GM12878 (cell line): ENCODE measurements at regions of chr2 and their contacts with region 1.

Region 1: DNA sequence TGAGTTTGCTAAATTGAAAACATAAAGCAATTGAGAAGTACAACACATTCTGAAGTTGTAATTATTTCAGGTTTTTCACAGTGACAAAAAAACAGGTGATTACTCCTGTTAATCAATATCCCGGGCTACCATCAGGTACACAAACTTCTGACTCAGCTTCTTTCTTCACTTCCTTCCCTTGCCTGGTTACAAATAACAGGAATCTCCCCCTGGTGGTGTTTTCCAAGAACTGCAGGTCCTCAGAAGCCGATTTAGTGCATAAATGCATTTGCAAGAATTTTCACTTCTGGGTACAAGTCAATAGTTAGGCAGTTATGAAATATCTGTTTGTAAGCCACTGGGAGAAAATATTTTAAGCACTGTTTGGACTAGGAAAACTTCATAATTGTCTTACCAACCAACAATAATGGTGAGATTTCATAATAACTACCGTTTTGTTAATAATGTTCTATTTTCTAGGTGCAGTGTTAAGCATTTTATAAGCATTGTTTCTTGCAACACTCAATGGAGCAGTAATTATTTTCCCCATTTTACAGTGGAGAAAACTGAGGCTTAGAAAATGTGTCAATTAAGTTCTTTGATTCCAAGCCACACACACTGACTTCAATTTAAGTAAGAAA is 12.4 kb upstream of the GMCL1 start:
- DNase-seq: peak; percentile 66
- ATAC-seq: peak; percentile 89
- H3K4me3 ChIP-seq: no peak overlapping the region
- H3K27ac ChIP-seq: no peak overlapping the region; the same call in 1 of the 2 replicates
- H3K4me1 ChIP-seq: no peaks in the 10 kb centered on the region
- H3K27me3 ChIP-seq: no peaks in the 10 kb centered on the region
- CTCF ChIP-seq: peak; percentile 71 to 82 (median 80)
- EP300 ChIP-seq: no peak
- POLR2A ChIP-seq: no peak
- RAD21 ChIP-seq: peak; percentile 92

Region 2: DNA sequence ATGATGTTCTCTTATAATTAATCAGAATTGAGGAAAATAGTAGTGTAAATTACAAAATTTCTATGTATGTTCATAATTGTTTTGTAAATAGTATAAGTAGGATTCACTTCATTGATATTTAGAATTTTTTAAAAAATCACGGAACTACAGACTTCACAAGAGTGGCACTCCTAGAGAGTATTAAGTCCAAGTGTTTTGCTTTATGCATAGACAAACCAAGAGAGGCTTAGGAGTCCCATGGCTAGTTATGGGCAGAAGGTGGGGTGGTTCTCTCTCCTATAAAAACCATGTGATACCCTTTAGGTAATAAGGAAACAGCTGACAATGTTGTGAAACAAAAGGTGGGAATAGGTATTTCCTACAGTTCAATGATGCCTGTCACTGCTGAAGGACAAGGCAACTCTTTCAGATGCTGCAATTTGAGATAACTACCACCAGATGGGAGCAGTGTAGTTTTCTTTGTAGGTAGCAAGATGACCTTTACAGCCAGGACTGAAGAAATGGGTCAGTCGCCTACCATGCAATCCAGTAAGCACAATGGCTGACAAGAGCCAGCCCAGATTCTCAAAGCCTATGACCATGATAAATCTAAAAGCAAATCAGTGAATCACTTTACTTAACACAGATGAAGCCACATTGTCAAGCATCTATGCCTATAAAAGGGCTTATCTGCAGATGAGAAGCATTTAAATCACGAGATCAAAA is 257.4 kb before region 1 on chr2:
- CTCF ChIA-PET with region 1: interaction called, 7 read pairs
- POLR2A ChIA-PET with region 1: no interaction called
- RAD21 ChIA-PET with region 1: interaction called, 4 read pairs
- SMC1A ChIA-PET with region 1: interaction called, 3 read pairs
- in situ Hi-C with region 1: loop called (anchors 25 kb)
- intact Hi-C with region 1: loop called (anchors 5 kb)
- DNase-seq: no peak
- ATAC-seq: peak; percentile 94
- H3K4me3 ChIP-seq: no peak overlapping the region
- H3K27ac ChIP-seq: no peak overlapping the region
- H3K4me1 ChIP-seq: peaks cover 9% of the 10 kb centered on the region
- H3K27me3 ChIP-seq: no peaks in the 10 kb centered on the region
- CTCF ChIP-seq: peak; percentile 74 to 85 (median 77)
- EP300 ChIP-seq: no peak
- POLR2A ChIP-seq: no peak
- RAD21 ChIP-seq: peak; percentile 93

Region 3: GRCh38 chr2:69741619-69742466 is 75.2 kb before region 1 on chr2 and contains the start of gene ANXA4:
- CTCF ChIA-PET with region 1: interaction called, 60 read pairs
- POLR2A ChIA-PET with region 1: interaction called, 21 read pairs
- RAD21 ChIA-PET with region 1: interaction called, 55 read pairs
- SMC1A ChIA-PET with region 1: interaction called, 60 read pairs
- in situ Hi-C with region 1: no loop called
- intact Hi-C with region 1: loop called (anchors 5 kb)
- DNase-seq: no peak
- ATAC-seq: peak; percentile 91
- H3K4me3 ChIP-seq: peak within 1 kb of the TSS; percentile 71
- H3K27ac ChIP-seq: peak within 1 kb of the TSS; percentile 95
- H3K4me1 ChIP-seq: peaks cover 6% of the 10 kb centered on the region
- H3K27me3 ChIP-seq: no peaks in the 10 kb centered on the region
- CTCF ChIP-seq: no peak
- EP300 ChIP-seq: peak in 1 of 2 experiments; percentile 34; a peak in 1 of 4 replicates
- POLR2A ChIP-seq: peak; percentile 89
- RAD21 ChIP-seq: no peak
- polyA plus RNA-seq, gene ANXA4: 64.6 to 73.1 TPM

Region 4: GRCh38 chr2:69770193-69771146 is 46.6 kb before region 1 on chr2:
- CTCF ChIA-PET with region 1: interaction called, 23 read pairs
- POLR2A ChIA-PET with region 1: interaction called, 3 read pairs
- RAD21 ChIA-PET with region 1: interaction called, 24 read pairs
- SMC1A ChIA-PET with region 1: interaction called, 61 read pairs
- in situ Hi-C with region 1: no loop called
- intact Hi-C with region 1: loop called (anchors 2 kb)
- DNase-seq: no peak
- ATAC-seq: peak; percentile 62
- H3K4me3 ChIP-seq: no peak overlapping the region
- H3K27ac ChIP-seq: no peak overlapping the region
- H3K4me1 ChIP-seq: peaks cover 60% of the 10 kb centered on the region
- H3K27me3 ChIP-seq: no peaks in the 10 kb centered on the region
- CTCF ChIP-seq: no peak
- EP300 ChIP-seq: no peak
- POLR2A ChIP-seq: no peak
- RAD21 ChIP-seq: no peak

Region 5: GRCh38 chr2:69798909-69799526 is 18.0 kb before region 1 on chr2:
- CTCF ChIA-PET with region 1: interaction called, 103 read pairs
- POLR2A ChIA-PET with region 1: interaction called, 19 read pairs
- RAD21 ChIA-PET with region 1: interaction called, 35 read pairs
- SMC1A ChIA-PET with region 1: interaction called, 117 read pairs
- in situ Hi-C with region 1: no loop called
- intact Hi-C with region 1: loop called (anchors 2 kb)
- DNase-seq: no peak
- ATAC-seq: peak; percentile 68
- H3K4me3 ChIP-seq: peak overlapping the region; percentile 69
- H3K27ac ChIP-seq: peak overlapping the region; percentile 77
- H3K4me1 ChIP-seq: peaks cover 69% of the 10 kb centered on the region
- H3K27me3 ChIP-seq: no peaks in the 10 kb centered on the region
- CTCF ChIP-seq: no peak
- EP300 ChIP-seq: no peak
- POLR2A ChIP-seq: no peak
- RAD21 ChIP-seq: no peak

Region 6: GRCh38 chr2:69837533-69837932 is 20.5 kb after region 1 on chr2:
- CTCF ChIA-PET with region 1: interaction called, 9 read pairs
- POLR2A ChIA-PET with region 1: no interaction called
- RAD21 ChIA-PET with region 1: interaction called, 3 read pairs
- SMC1A ChIA-PET with region 1: interaction called, 12 read pairs
- in situ Hi-C with region 1: no loop called
- intact Hi-C with region 1: no loop called
- DNase-seq: no peak
- ATAC-seq: peak; percentile 68
- H3K4me3 ChIP-seq: 0 out of 2 replicates have a peak overlapping the region, but pooled peaks have one; percentile 25
- H3K27ac ChIP-seq: no peak overlapping the region
- H3K4me1 ChIP-seq: peaks cover 9% of the 10 kb centered on the region
- H3K27me3 ChIP-seq: no peaks in the 10 kb centered on the region
- CTCF ChIP-seq: no peak
- EP300 ChIP-seq: no peak
- POLR2A ChIP-seq: no peak
- RAD21 ChIP-seq: no peak